IMR-90 (cell line): ENCODE measurements at regions of chr11 and their contacts with region 1.

Region 1: DNA sequence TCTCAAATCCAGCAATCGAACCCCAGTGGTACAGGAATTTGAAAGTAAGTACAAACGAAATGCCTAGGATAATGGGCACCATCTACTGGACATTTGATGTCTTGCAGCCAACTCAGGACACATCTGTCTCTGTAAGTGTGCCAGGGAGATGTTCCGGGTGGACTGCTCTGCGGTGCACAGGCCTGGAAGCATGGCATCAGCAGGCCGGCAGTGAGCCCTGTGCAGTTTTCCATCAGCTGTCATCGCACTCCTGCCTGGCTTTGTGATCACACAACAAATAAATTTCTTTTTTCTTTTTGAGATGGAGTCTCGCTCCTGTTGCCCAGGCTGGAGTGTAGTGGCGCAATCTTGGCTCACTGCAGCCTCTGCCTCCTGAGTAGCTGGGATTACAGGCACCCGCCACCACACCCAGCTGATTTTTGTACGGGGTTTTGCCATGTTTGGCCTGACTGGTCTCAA is 71.0 kb downstream of the JAM3 start:
- DNase-seq: peak; percentile 83
- ATAC-seq: peak; percentile 96
- H3K4me3 ChIP-seq: no peak overlapping the region
- H3K27ac ChIP-seq: no peak overlapping the region
- H3K4me1 ChIP-seq: no peaks in the 10 kb centered on the region
- H3K27me3 ChIP-seq: no peaks in the 10 kb centered on the region
- CTCF ChIP-seq: peak; percentile 91
- POLR2A ChIP-seq: no peak
- RAD21 ChIP-seq: peak; percentile 92

Region 2: GRCh38 chr11:133927690-133928627 is 211.9 kb before region 1 on chr11:
- CTCF ChIA-PET with region 1: no interaction called
- POLR2A ChIA-PET with region 1: no interaction called
- dilution Hi-C with region 1: no loop called
- in situ Hi-C with region 1: loop called (anchors 10 kb)
- intact Hi-C with region 1: loop called (anchors 1 kb)
- DNase-seq: peak; percentile 39
- ATAC-seq: peak; percentile 99
- H3K4me3 ChIP-seq: no peak overlapping the region
- H3K27ac ChIP-seq: no peak overlapping the region
- H3K4me1 ChIP-seq: no peaks in the 10 kb centered on the region
- H3K27me3 ChIP-seq: no peaks in the 10 kb centered on the region
- CTCF ChIP-seq: peak; percentile 81
- POLR2A ChIP-seq: no peak
- RAD21 ChIP-seq: peak; percentile 87

Region 3: GRCh38 chr11:133978794-133979193 is 161.1 kb before region 1 on chr11:
- CTCF ChIA-PET with region 1: no interaction called
- POLR2A ChIA-PET with region 1: no interaction called
- dilution Hi-C with region 1: no loop called
- in situ Hi-C with region 1: no loop called
- intact Hi-C with region 1: no loop called
- DNase-seq: peak; percentile 3
- ATAC-seq: no peak
- H3K4me3 ChIP-seq: no peak overlapping the region
- H3K27ac ChIP-seq: no peak overlapping the region
- H3K4me1 ChIP-seq: no peaks in the 10 kb centered on the region
- H3K27me3 ChIP-seq: peaks cover 2% of the 10 kb centered on the region; the same call in 1 of the 2 replicates
- CTCF ChIP-seq: no peak
- POLR2A ChIP-seq: no peak
- RAD21 ChIP-seq: no peak